Natural killer cell (primary cell): ENCODE measurements at regions of chr13 and their contacts with region 1.

Region 1: DNA sequence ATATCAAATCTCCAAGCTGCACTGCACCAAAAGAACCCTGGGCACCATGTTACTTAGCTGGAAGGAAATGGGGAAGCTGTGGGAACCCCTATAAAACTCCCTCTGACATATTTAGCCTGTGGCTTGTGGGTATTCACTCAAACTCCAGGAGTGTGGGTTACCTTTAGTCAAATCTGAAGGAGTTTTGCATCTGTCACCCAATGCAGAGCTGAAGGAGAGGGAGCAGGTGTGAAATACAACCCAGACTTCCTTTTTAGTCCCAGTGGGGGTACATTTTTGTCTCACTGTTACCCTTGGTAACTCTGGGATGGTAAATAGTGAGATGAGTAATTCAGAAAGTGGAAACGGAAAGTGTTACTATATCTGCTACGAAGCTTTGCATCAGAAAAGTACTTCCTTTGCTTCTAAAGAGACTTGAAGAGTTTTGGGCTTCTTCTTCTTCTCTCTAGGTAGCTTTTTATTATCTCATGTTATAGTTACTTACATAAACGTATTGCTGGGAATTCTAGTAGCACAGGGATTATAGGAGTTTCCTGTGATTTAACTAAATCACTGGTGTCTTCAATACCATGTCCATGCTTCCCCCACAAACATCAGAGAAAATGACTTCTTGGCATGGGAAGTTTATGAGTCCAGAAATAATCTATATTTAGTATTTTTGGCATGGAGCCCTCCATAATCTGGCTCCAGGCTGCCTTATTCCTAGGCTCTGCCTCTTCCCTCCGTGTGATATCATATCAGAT is 105.9 kb downstream of the AKAP11 start:
- DNase-seq: peak in 1 of 2 donors; percentile 75
- ATAC-seq: peak; percentile 76 to 85 (median 79)
- H3K4me3 ChIP-seq: no peak overlapping the region
- H3K4me3 Mint-ChIP-seq: peak overlapping the region; percentile 67
- H3K27ac ChIP-seq: peak overlapping the region; percentile 83
- H3K27ac Mint-ChIP-seq: peak overlapping the region; percentile 86
- H3K4me1 ChIP-seq: peaks cover 33% of the 10 kb centered on the region
- H3K4me1 Mint-ChIP-seq: peaks cover 40 to 44% of the 10 kb centered on the region in 2 donors
- H3K27me3 ChIP-seq: no peaks in the 10 kb centered on the region
- H3K27me3 Mint-ChIP-seq: peaks cover 0 to 4% of the 10 kb centered on the region in 2 donors
- CTCF ChIP-seq: no peak

Region 2: GRCh38 chr13:42271337-42272114 is 106.3 kb before region 1 on chr13:
- intact Hi-C with region 1: loop called (anchors 5 kb)
- DNase-seq: peak; percentile 86 to 98
- ATAC-seq: peak; percentile 84 to 93 (median 90)
- H3K4me3 ChIP-seq: peak overlapping the region; percentile 75
- H3K4me3 Mint-ChIP-seq: peak overlapping the region; percentile 98
- H3K27ac ChIP-seq: peak overlapping the region; percentile 94
- H3K27ac Mint-ChIP-seq: peak overlapping the region; percentile 95
- H3K4me1 ChIP-seq: peaks cover 9% of the 10 kb centered on the region
- H3K4me1 Mint-ChIP-seq: peaks cover 43 to 48% of the 10 kb centered on the region in 2 donors
- H3K27me3 ChIP-seq: no peaks in the 10 kb centered on the region
- H3K27me3 Mint-ChIP-seq: peaks cover 8 to 9% of the 10 kb centered on the region in 2 donors
- CTCF ChIP-seq: no peak

Region 3: DNA sequence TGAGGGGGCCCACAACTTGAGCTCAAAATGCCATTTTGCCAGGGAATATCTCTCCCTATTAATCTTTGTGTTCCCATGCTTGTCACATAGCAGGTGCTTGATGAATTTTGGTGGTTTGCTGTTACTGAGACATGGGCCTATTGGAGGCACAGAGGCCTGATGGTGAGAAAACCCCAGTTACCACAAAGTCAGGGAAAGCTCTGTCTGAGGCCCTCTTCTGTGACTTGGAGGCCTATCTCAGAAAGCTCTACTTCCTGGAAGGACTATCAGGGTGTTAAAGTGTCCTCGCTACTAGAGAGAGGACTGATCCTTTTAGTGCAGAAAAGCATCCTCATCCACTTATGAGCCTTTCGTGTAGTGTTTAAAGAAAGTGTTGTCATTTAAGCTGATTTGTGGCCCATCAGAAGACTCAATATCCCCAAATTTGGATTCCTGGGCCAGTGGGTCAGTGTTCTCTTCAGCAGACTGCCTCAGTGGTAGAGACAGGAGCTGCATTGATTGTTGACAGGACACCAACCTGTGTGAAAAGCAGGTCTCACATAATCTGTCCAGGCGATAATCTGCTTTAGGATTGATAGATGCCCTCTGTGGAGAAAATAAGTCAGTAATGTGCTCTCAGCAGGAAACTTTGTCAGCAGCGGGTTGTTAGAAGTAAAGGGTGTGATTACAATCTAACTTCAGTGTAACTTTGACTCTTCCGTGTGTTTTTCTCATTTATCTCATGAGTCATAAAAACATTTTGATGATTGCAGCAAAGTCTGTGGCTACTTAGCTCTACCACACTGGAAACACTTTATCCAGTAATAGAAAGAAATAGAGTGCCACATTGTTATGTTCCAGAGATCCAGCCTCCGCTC is 15.1 kb after region 1 on chr13:
- intact Hi-C with region 1: loop called (anchors 1 kb)
- DNase-seq: peak in 1 of 2 donors; percentile 69
- ATAC-seq: peak; percentile 74 to 76 (median 75)
- H3K4me3 ChIP-seq: no peak overlapping the region
- H3K4me3 Mint-ChIP-seq: peak overlapping the region; percentile 77
- H3K27ac ChIP-seq: peak overlapping the region; percentile 75
- H3K27ac Mint-ChIP-seq: peak overlapping the region; percentile 88 to 90
- H3K4me1 ChIP-seq: peaks cover 50% of the 10 kb centered on the region
- H3K4me1 Mint-ChIP-seq: peaks cover 60 to 67% of the 10 kb centered on the region in 2 donors
- H3K27me3 ChIP-seq: no peaks in the 10 kb centered on the region
- H3K27me3 Mint-ChIP-seq: peaks cover 0 to 3% of the 10 kb centered on the region in 2 donors
- CTCF ChIP-seq: no peak

Region 4: GRCh38 chr13:42548731-42549551 is 171.1 kb after region 1 on chr13:
- intact Hi-C with region 1: loop called (anchors 2 kb)
- DNase-seq: peak; percentile 28 to 42
- ATAC-seq: peak; percentile 72 to 95 (median 95)
- H3K4me3 ChIP-seq: no peak overlapping the region
- H3K4me3 Mint-ChIP-seq: peak overlapping the region; percentile 83
- H3K27ac ChIP-seq: peak overlapping the region; percentile 58
- H3K27ac Mint-ChIP-seq: peak overlapping the region; percentile 17 to 88
- H3K4me1 ChIP-seq: peaks cover 25% of the 10 kb centered on the region
- H3K4me1 Mint-ChIP-seq: peaks cover 39 to 53% of the 10 kb centered on the region in 2 donors
- H3K27me3 ChIP-seq: no peaks in the 10 kb centered on the region
- H3K27me3 Mint-ChIP-seq: no peaks in the 10 kb centered on the region
- CTCF ChIP-seq: no peak

Region 5: DNA sequence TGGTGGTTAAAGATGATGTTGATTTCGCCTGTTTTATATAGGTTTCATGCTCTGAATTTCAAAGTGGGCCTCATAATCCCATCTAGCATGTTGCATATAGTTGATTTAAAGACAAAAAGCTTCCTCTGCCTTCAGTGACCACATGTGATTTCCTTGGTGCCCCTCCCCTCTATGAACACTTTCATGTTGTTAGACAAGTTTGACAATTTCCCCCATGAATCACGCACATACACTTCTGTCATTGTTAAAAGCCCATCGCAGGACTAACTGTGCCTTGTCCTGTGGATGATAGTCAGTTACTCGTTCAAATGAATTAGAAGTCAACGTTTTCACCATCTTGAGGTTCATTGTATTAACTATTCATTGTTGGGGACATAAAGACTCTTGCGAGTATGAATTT is 202.8 kb after region 1 on chr13:
- intact Hi-C with region 1: loop called (anchors 1 kb)
- DNase-seq: no peak
- ATAC-seq: peak; percentile 79 to 87 (median 86)
- H3K4me3 ChIP-seq: no peak overlapping the region
- H3K4me3 Mint-ChIP-seq: peak overlapping the region; percentile 65
- H3K27ac ChIP-seq: peak overlapping the region; percentile 65
- H3K27ac Mint-ChIP-seq: peak overlapping the region; percentile 83 to 86
- H3K4me1 ChIP-seq: peaks cover 15% of the 10 kb centered on the region
- H3K4me1 Mint-ChIP-seq: peaks cover 37 to 45% of the 10 kb centered on the region in 2 donors
- H3K27me3 ChIP-seq: no peaks in the 10 kb centered on the region
- H3K27me3 Mint-ChIP-seq: peaks cover 0 to 8% of the 10 kb centered on the region in 2 donors
- CTCF ChIP-seq: no peak

Region 6: DNA sequence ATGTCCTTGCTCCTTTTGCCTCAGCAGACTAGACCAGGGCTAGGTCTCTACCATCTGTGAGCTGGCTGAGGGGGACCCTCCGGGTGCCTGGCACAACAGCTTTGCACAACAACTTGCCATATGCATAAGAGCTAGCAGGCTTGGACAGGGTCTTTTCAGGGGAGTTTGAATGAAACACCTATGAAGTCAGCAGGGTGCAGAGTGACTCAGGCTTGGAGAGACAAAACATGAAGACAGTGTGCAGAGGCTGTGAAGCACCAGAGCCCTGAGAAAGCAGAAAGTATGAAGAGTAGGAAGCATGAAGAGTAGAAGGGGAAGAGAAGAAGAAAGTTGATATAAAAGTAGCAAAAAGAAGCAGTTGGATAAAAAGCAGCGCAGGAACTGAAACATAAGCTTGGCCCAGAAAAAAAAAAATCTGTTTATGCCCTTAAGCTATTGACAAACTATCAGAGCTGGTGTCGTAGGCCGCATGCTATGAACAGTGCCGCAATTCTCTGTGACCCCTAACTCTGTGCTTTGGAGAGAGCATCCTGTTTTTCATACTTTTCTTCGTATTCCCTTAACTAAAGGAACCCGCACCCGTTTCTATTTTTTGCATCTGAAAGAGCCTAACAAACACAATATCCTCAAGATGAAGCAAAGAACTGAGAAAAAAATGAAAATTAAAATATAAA is 350.8 kb after region 1 on chr13:
- intact Hi-C with region 1: no loop called
- DNase-seq: no peak
- ATAC-seq: no peak
- H3K4me3 ChIP-seq: no peak overlapping the region
- H3K4me3 Mint-ChIP-seq: no peak overlapping the region
- H3K27ac ChIP-seq: no peak overlapping the region
- H3K27ac Mint-ChIP-seq: no peak overlapping the region
- H3K4me1 ChIP-seq: no peaks in the 10 kb centered on the region
- H3K4me1 Mint-ChIP-seq: no peaks in the 10 kb centered on the region
- H3K27me3 ChIP-seq: no peaks in the 10 kb centered on the region
- H3K27me3 Mint-ChIP-seq: no peaks in the 10 kb centered on the region
- CTCF ChIP-seq: no peak

Region 7: GRCh38 chr13:43132257-43132656 is 754.4 kb after region 1 on chr13:
- intact Hi-C with region 1: no loop called
- DNase-seq: peak in 1 of 2 donors; percentile 29
- ATAC-seq: no peak
- H3K4me3 ChIP-seq: no peak overlapping the region
- H3K4me3 Mint-ChIP-seq: no peak overlapping the region
- H3K27ac ChIP-seq: no peak overlapping the region
- H3K27ac Mint-ChIP-seq: no peak overlapping the region
- H3K4me1 ChIP-seq: peaks cover 4% of the 10 kb centered on the region
- H3K4me1 Mint-ChIP-seq: peaks cover 13 to 14% of the 10 kb centered on the region in 2 donors
- H3K27me3 ChIP-seq: no peaks in the 10 kb centered on the region
- H3K27me3 Mint-ChIP-seq: peaks cover 0 to 7% of the 10 kb centered on the region in 2 donors
- CTCF ChIP-seq: no peak